ENCODE measurements at regions of chr6 and their contacts with region 1.

Region 1: GRCh38 chr6:135535989-135536414 is 38.5 kb upstream of the AHI1 start:
- ATAC-seq: peak in 3 of 8 experiments; percentile 34 to 69 (median 50)
- H3K4me3 ChIP-seq: no peak overlapping the region
- H3K27ac ChIP-seq: no peak overlapping the region
- H3K4me1 ChIP-seq: no peaks in the 10 kb centered on the region

Region 2: GRCh38 chr6:135640449-135641111 is 104.6 kb after region 1 on chr6:
- in situ Hi-C with region 1: no loop called
- ATAC-seq: no peak
- H3K4me3 ChIP-seq: no peak overlapping the region
- H3K27ac ChIP-seq: no peak overlapping the region
- H3K4me1 ChIP-seq: no peaks in the 10 kb centered on the region

Region 3: DNA sequence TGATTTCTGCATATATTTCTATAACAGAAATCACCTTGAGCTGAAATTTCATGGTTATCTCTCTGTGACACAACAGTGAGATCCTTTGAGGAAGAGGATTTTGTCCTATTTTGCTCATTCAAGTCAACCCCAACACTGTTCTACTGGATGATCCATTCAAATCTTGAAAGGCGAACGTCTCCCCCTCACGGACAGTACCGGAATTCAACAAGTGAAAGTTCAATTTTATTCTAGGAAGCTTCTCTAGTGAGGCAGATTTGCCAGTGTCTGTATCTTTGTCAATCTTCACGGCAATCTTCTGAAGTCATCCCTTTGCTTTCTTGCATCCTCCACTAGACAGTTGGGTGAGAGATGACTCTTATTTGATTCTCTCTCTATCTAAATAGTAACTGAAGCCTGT is 223.8 kb after region 1 on chr6:
- in situ Hi-C with region 1: loop called in 1 of 9 experiments (anchors 25 kb)
- ATAC-seq: peak in 2 of 8 experiments; percentile 48 to 59
- H3K4me3 ChIP-seq: no peak overlapping the region
- H3K27ac ChIP-seq: no peak overlapping the region
- H3K4me1 ChIP-seq: no peaks in the 10 kb centered on the region

Region 4: GRCh38 chr6:136201732-136202131 is 665.7 kb after region 1 on chr6:
- in situ Hi-C with region 1: loop called in 1 of 9 experiments (anchors 25 kb)
- ATAC-seq: peak in 6 of 8 experiments; percentile 12 to 91 (median 40)
- H3K4me3 ChIP-seq: no peak overlapping the region
- H3K27ac ChIP-seq: no peak overlapping the region
- H3K4me1 ChIP-seq: no peaks in the 10 kb centered on the region

Region 5: DNA sequence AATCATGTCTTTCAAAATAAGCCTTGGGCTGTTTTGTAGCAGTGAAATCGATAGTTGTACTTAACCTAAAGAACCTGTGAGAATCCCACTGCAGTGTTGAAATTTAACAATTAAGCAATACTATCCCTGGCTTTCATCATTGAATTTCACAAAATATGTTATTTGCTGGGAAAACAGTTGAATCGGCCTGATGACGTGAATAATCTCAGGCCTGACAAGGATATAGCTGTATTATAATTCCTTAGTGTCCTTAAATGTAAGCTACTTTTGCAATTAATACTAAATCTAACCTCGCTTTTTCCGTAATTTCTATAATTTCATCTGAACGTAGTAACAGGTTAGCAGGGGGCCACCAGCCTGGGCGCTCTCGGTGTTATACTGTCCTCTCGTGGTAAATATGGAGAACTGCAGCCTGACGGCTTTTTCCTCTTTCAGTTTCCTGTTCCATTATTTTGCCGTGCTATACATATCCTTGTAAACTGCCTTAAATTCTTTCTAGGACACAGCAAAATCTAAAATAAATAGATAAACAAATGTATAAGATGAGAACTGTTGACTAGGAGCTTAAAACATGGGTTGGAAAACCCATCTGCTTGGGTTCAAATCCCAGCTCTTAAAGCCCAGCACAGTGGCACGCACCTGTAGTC is 690.1 kb after region 1 on chr6:
- in situ Hi-C with region 1: loop called in 4 of 9 experiments (anchors 10 to 25 kb)
- ATAC-seq: peak; percentile 18 to 82 (median 60)
- H3K4me3 ChIP-seq: no peak overlapping the region
- H3K27ac ChIP-seq: no peak overlapping the region
- H3K4me1 ChIP-seq: no peaks in the 10 kb centered on the region

Region 6: GRCh38 chr6:136249811-136250685 is 714.0 kb after region 1 on chr6 and contains the start of gene MTFR2:
- in situ Hi-C with region 1: loop called in 2 of 9 experiments (anchors 25 kb)
- ATAC-seq: peak; percentile 84 to 99 (median 97)
- H3K4me3 ChIP-seq: peak within 1 kb of the TSS; percentile 49 to 65 (median 53)
- H3K27ac ChIP-seq: peak within 1 kb of the TSS; percentile 5 to 8
- H3K4me1 ChIP-seq: peaks cover 3 to 7% of the 10 kb centered on the region in 2 donors
- total RNA-seq, gene MTFR2: 0.54 to 9.3 (median 2.3) TPM

Measured in motor neuron (in vitro differentiated cells).